Activated CD8-positive, alpha-beta T cell treated with anti-CD3 and anti-CD28 coated beads for 36 hours (primary cell): ENCODE measurements at regions of chr1 and their contacts with region 1.

Region 1: DNA sequence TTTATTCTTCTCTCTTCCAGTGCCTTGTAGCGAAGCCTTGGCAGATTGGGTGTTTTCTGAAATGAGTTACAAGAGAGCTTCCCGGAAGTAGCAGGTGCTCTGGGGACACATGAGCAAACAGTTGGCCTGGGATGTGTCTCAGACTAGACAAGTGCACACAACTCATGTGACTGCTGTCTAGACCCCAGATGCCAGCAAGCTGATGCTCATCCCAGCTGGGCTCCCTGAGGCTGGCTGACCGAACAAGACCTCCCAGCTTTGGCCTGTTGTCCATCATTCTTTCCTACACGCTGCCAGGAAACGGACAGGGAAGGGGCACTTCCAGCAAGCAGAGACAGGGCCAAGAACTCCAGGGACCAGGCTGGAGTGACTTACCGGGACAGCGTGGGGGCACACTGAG is 18.7 kb upstream of the CSF1 start:
- DNase-seq: no peak
- ATAC-seq: no peak
- H3K4me3 Mint-ChIP-seq: no peak overlapping the region
- H3K27ac Mint-ChIP-seq: no peak overlapping the region
- H3K4me1 Mint-ChIP-seq: peaks cover 34% of the 10 kb centered on the region
- H3K27me3 Mint-ChIP-seq: no peaks in the 10 kb centered on the region
- CTCF ChIP-seq: no peak

Region 2: DNA sequence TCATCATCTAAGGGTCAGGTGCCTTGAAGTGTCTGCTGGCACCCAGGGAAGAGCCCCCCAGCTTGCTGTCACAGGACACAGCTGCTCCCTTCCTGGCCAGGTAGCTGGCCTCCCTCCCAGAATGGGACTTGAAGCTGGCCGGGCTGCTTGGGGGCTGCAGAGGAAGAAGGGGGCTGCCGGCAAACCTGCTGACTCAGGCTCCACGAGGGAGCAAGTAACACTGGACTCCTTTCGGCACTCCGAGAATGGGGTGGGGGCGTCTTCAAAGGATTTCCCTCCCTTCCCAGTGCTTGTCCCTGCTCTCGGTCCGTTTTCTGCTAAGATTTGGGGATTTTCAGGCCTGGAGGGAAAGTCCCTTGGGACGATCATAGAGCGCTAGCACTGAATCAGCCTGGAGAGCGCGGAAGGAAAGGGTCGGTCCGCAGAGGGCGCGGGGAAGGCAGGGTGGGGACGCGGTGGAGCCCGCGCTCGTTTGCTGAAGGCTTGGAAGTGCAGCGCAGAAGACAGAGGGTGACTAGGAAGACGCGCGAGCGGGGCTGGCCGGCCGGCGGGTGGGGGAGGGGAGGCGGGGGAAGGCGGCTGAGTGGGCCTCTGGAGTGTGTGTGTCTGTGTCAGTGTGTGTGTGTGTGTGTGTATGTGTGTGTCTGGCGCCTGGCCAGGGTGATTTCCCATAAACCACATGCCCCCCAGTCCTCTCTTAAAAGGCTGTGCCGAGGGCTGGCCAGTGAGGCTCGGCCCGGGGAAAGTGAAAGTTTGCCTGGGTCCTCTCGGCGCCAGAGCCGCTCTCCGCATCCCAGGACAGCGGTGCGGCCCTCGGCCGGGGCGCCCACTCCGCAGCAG is 18.4 kb after region 1 on chr1 and contains the start of gene CSF1:
- CTCF ChIA-PET with region 1: interaction called, 5 read pairs
- POLR2A ChIA-PET with region 1: interaction called, 11 read pairs
- intact Hi-C with region 1: no loop called
- DNase-seq: peak; percentile 78
- ATAC-seq: peak; percentile 41
- H3K4me3 Mint-ChIP-seq: peak within 1 kb of the TSS; percentile 90
- H3K27ac Mint-ChIP-seq: peak within 1 kb of the TSS; percentile 95
- H3K4me1 Mint-ChIP-seq: peaks cover 70% of the 10 kb centered on the region
- H3K27me3 Mint-ChIP-seq: no peaks in the 10 kb centered on the region
- CTCF ChIP-seq: no peak
- total RNA-seq, gene CSF1: 28.3 to 33.3 TPM

Region 3: GRCh38 chr1:109931189-109931731 is 39.3 kb after region 1 on chr1:
- CTCF ChIA-PET with region 1: no interaction called
- POLR2A ChIA-PET with region 1: no interaction called
- intact Hi-C with region 1: no loop called
- DNase-seq: no peak
- ATAC-seq: no peak
- H3K4me3 Mint-ChIP-seq: no peak overlapping the region
- H3K27ac Mint-ChIP-seq: no peak overlapping the region
- H3K4me1 Mint-ChIP-seq: peaks cover 7% of the 10 kb centered on the region
- H3K27me3 Mint-ChIP-seq: no peaks in the 10 kb centered on the region
- CTCF ChIP-seq: no peak